Activated CD8-positive, alpha-beta T cell treated with anti-CD3 and anti-CD28 coated beads, Interleukin-2, amount 10 ng/mL, durations not matched to agents 7 days and 5 days (primary cell): ENCODE measurements at regions of chr6 and their contacts with region 1.

Region 1: GRCh38 chr6:139134817-139135581 is at the start of gene HECA:
- DNase-seq: peak; percentile 98
- ATAC-seq: peak; percentile 71
- H3K4me3 Mint-ChIP-seq: peak within 1 kb of the TSS; percentile 90
- H3K27ac Mint-ChIP-seq: peak within 1 kb of the TSS; percentile 93
- H3K4me1 Mint-ChIP-seq: peaks cover 68% of the 10 kb centered on the region
- H3K27me3 Mint-ChIP-seq: no peaks in the 10 kb centered on the region
- total RNA-seq, gene HECA: 33.9 to 34.4 TPM

Region 2: GRCh38 chr6:139112146-139112545 is 22.9 kb before region 1 on chr6:
- CTCF ChIA-PET with region 1: interaction called, 13 read pairs
- POLR2A ChIA-PET with region 1: interaction called, 3 read pairs
- DNase-seq: no peak
- ATAC-seq: no peak
- H3K4me3 Mint-ChIP-seq: no peak overlapping the region
- H3K27ac Mint-ChIP-seq: peak overlapping the region; percentile 13
- H3K4me1 Mint-ChIP-seq: peaks cover 58% of the 10 kb centered on the region
- H3K27me3 Mint-ChIP-seq: no peaks in the 10 kb centered on the region

Region 3: DNA sequence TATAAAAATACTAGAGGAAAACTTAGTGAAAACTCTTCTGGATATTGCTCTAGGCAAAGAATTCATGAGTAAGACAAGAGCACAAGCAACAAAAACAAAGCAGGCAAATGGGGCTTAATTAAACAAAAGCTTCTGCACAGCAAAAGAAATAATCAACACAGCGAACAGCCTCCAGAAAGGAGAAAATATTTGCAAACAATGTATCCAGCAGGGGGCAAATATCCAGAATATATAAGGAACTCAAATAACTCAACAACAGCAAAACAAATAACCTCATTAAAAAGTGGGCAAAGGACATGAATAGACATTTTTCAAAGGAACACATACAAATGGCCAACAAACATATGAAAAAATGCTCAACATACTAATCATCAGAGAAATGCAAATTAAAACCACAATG is 17.3 kb before region 1 on chr6:
- CTCF ChIA-PET with region 1: interaction called, 26 read pairs
- POLR2A ChIA-PET with region 1: interaction called, 3 read pairs
- DNase-seq: no peak
- ATAC-seq: no peak
- H3K4me3 Mint-ChIP-seq: no peak overlapping the region
- H3K27ac Mint-ChIP-seq: no peak overlapping the region
- H3K4me1 Mint-ChIP-seq: peaks cover 39% of the 10 kb centered on the region
- H3K27me3 Mint-ChIP-seq: no peaks in the 10 kb centered on the region

Region 4: GRCh38 chr6:139149383-139149782 is 14.4 kb after region 1 on chr6:
- CTCF ChIA-PET with region 1: interaction called, 24 read pairs
- POLR2A ChIA-PET with region 1: interaction called, 18 read pairs
- DNase-seq: no peak
- ATAC-seq: no peak
- H3K4me3 Mint-ChIP-seq: no peak overlapping the region
- H3K27ac Mint-ChIP-seq: peak overlapping the region; percentile 63
- H3K4me1 Mint-ChIP-seq: peaks cover 89% of the 10 kb centered on the region
- H3K27me3 Mint-ChIP-seq: no peaks in the 10 kb centered on the region

Region 5: GRCh38 chr6:139161817-139162284 is 26.9 kb after region 1 on chr6:
- CTCF ChIA-PET with region 1: interaction called, 43 read pairs
- POLR2A ChIA-PET with region 1: interaction called, 11 read pairs
- DNase-seq: peak; percentile 77
- ATAC-seq: peak; percentile 72
- H3K4me3 Mint-ChIP-seq: peak overlapping the region; percentile 63
- H3K27ac Mint-ChIP-seq: peak overlapping the region; percentile 98
- H3K4me1 Mint-ChIP-seq: peaks cover 78% of the 10 kb centered on the region
- H3K27me3 Mint-ChIP-seq: no peaks in the 10 kb centered on the region

Region 6: DNA sequence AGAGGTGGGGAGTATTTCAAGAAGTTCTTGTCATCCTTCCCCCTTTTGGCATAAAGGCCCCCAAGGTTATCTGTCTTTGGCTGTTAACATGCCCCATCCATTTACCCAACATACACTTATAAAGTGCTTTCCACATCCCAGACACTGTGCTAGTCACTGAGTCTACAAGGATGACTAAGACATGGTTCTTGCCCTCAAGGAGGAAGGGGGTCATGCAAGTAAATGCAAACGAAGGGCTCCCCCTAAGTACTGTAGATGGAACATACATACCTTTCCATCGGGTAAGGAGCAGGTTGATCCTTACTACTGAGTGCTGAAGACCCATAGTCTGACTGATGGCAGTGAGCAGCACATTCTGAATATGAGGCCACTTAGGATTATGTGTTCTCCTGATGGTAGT is 38.2 kb after region 1 on chr6:
- CTCF ChIA-PET with region 1: interaction called, 10 read pairs
- POLR2A ChIA-PET with region 1: interaction called, 3 read pairs
- DNase-seq: peak; percentile 48
- ATAC-seq: peak; percentile 74
- H3K4me3 Mint-ChIP-seq: no peak overlapping the region
- H3K27ac Mint-ChIP-seq: peak overlapping the region; percentile 75
- H3K4me1 Mint-ChIP-seq: peaks cover 85% of the 10 kb centered on the region
- H3K27me3 Mint-ChIP-seq: no peaks in the 10 kb centered on the region

Region 7: DNA sequence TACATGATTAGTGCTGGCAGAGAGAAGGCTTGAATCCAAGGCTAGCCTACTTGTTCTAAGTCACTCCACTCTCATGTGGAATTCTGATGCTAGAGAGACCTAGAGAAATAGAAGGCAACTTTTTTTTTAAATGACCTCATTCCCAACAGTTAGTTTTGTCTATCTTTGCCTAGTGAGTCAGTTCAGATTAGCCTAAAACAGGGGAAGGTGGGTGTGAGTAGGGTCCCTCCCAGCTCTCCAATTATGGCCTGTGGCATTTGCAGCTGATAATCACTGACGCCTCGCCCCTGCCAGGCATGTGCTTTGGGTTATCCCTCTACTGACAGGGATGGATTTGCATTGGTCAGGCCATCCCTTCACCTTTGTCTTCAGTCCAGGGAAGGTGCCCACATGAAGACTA is 143.2 kb after region 1 on chr6:
- CTCF ChIA-PET with region 1: no interaction called
- POLR2A ChIA-PET with region 1: no interaction called
- DNase-seq: no peak
- ATAC-seq: no peak
- H3K4me3 Mint-ChIP-seq: no peak overlapping the region
- H3K27ac Mint-ChIP-seq: peak overlapping the region; percentile 18
- H3K4me1 Mint-ChIP-seq: peaks cover 39% of the 10 kb centered on the region
- H3K27me3 Mint-ChIP-seq: no peaks in the 10 kb centered on the region